Left ventricle myocardium superior (tissue), 1 donor: ENCODE measurements at regions of chr11 and their contacts with region 1.

Region 1: DNA sequence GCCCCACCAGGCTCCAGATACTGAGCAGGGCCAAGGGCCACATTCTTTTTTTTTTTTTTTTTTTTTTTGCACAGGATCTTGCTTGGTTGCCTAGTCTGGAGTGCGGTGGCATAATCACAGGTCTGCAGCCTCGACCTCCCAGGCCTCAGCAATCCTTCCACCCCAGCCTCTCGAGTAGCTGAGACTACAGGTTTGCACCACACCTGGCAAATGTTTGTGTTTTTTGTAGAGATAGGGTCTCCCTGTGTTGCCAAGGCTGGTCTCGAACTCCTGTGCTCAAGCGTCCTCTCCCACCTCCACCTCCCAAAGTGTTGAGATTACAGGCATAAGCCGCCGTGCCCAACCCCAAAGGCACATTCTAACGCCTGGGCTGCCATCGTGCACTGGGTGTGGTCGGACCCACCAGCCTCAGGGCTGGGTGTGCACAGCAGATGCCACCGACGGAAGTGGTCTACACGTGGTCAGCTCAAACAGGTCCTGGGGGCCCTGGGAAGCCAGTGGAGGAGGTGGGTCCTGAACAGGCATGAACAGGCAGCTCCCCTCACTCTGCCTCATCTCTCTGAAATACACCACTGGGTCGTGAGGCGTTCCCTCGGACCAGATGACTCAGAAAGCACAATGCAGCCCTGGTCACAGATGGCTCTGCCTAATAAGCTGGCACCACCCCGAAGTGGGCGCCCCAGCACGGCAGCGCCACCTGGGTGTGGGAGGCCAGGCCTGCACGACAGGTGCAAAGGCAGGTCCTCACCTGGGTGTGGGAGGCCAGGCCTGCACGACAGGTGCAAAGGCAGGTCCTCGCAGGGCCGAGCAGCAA is 5.1 kb upstream of the B4GALNT4 start:
- DNase-seq: no peak
- ATAC-seq: peak; percentile 14

Region 2: DNA sequence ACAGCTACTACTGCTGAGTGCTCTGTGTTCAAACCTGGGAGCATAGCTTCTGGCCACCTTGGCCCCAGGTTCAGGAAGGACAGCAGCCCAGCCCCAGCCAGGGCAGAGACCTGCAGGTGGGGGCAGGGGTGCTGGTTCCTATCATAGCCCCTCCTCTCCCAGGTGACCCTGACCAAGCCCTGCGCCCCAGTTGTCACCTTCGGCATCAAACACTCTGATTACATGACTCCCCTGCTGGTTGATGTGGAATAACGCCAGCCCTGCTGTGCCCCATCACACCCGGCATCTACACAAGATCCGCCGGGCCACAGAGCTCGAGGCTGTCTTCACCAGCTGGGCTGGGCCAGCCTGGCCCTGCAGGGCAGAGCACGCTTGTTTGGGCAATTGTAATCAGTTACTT is 164.4 kb before region 1 on chr11:
- intact Hi-C with region 1: loop called (anchors 5 kb)
- DNase-seq: no peak
- ATAC-seq: no peak

Region 3: DNA sequence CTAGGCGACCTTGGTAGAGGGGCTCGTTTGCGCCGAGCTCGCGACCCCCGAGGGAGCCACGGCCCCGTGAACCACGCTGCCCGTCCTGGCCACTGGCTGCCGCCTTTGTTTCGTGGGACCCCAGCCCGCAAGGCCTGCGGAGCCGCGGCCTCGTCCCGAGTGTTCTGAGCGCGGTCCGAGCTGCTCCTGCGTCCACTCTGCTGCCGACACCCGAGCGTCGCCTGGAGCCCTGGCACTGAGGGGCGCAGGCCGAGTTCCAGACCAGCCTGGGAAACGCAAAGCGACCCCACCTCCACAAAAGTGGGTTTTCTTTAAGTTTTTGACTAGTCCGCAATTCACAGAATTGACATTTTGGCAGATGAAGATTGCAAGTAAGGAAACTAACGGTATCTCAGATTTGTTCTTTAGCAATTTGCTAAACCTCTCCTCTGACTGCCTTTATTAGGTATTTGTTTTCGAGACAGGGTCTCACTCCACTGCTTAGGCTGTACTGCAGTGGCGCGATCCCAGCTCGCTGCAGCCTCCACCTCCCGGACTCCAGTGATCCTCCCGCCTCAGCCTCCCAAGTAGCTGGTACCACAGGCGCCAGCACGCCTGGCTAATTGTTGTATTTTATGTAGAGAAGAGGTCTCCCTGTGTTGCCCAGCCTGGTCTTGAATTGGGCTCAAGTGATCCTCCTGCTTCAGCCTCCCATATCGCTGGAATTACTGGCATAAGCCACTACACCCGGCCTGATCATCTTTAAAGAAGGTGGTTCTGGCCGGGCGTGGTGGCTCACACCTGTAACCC is 143.8 kb after region 1 on chr11:
- intact Hi-C with region 1: no loop called
- DNase-seq: no peak
- ATAC-seq: no peak